ENCODE measurements at regions of chr4 and their contacts with region 1.

Region 1: DNA sequence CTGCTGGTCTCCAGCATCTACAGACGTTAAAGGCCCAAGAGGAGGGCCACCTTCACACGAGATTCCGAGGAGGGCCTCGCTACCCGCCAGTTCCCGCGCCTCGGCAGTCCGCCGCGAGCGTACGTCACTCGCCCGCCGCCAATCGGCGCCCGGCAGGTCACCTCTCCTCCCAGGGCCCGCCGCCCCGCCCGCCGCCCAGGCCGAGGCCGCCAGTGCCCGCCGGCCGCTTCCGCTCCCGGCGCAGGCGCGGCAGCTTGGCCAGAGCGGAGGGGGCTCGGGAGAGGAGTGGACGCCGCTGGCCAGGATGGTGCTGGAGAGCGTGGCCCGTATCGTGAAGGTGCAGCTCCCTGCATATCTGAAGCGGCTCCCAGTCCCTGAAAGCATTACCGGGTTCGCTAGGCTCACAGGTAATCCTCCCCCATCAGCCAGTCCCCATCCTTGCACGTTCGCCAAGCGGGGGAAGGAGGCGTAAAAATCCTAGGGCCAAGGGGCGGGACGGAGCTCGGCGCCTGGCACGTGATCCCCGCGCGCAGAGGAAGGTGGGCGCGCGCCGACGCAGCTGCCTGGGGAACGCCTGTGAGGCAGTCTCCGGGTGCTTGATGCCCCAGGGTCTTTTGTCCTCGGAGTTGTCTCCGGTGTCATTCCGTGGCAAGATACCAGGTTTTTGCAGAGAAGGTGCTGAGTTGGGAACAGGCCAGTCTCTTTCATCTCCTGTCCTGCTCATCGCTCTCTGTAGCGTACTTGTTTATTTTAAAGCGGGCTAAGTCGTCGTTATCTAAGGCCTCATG is at the start of gene CISD2:
- DNase-seq: peak; percentile 93 to 95
- H3K4me3 ChIP-seq: peak within 1 kb of the TSS; percentile 84
- H3K4me3 Mint-ChIP-seq: peak within 1 kb of the TSS; percentile 97
- H3K27ac Mint-ChIP-seq: peak within 1 kb of the TSS; percentile 95
- H3K4me1 ChIP-seq: 0 out of 2 replicates have a peak, but pooled peaks cover 3% of the 10 kb centered on the region
- H3K4me1 Mint-ChIP-seq: peaks cover 6% of the 10 kb centered on the region
- H3K27me3 ChIP-seq: no peaks in the 10 kb centered on the region
- H3K27me3 Mint-ChIP-seq: no peaks in the 10 kb centered on the region
- CTCF ChIP-seq: no peak
- total RNA-seq, gene CISD2: 54.0 and 58.6 TPM in 2 replicates

Region 2: DNA sequence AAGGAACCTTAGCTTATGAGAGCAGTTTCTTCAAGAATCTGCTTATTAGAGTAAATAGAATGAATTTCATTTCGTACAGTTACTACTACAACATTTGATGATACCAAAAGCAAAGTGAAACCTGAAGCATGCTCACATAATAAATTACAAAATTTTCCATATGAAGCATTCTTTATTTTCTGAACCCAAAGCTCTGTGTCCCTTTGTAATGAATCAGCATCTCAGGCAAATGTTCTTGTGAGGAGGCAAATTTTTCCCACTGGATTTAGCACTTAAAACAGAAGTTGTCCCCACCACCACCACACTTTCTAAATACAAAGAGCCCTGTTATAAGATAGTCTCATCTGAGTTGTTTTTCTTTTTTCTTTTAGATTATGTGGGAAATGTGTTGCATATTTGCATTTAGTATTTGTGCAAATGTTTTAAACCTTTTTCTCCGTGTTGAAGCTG is 438.5 kb before region 1 on chr4:
- CTCF ChIA-PET with region 1: no interaction called
- POLR2A ChIA-PET with region 1: no interaction called
- intact Hi-C with region 1: loop called (anchors 2 kb)
- DNase-seq: no peak
- H3K4me3 ChIP-seq: peak overlapping the region; percentile 41
- H3K4me3 Mint-ChIP-seq: peak overlapping the region; percentile 82
- H3K27ac Mint-ChIP-seq: peak overlapping the region; percentile 77
- H3K4me1 ChIP-seq: peaks cover 5% of the 10 kb centered on the region; the same call in 1 of the 2 replicates
- H3K4me1 Mint-ChIP-seq: peaks cover 10% of the 10 kb centered on the region
- H3K27me3 ChIP-seq: no peaks in the 10 kb centered on the region
- H3K27me3 Mint-ChIP-seq: no peaks in the 10 kb centered on the region
- CTCF ChIP-seq: no peak

Region 3: GRCh38 chr4:102674881-102675540 is 194.0 kb before region 1 on chr4:
- CTCF ChIA-PET with region 1: no interaction called
- POLR2A ChIA-PET with region 1: no interaction called
- intact Hi-C with region 1: loop called (anchors 2 kb)
- DNase-seq: peak; percentile 68 to 69
- H3K4me3 ChIP-seq: no peak overlapping the region
- H3K4me3 Mint-ChIP-seq: no peak overlapping the region
- H3K27ac Mint-ChIP-seq: peak overlapping the region; percentile 87
- H3K4me1 ChIP-seq: peaks cover 60% of the 10 kb centered on the region
- H3K4me1 Mint-ChIP-seq: peaks cover 15% of the 10 kb centered on the region
- H3K27me3 ChIP-seq: no peaks in the 10 kb centered on the region
- H3K27me3 Mint-ChIP-seq: no peaks in the 10 kb centered on the region
- CTCF ChIP-seq: no peak